Calu3 (cell line): ENCODE measurements at regions of chr12 and their contacts with region 1.

Region 1: GRCh38 chr12:40446385-40446784 is 221.6 kb downstream of the LRRK2 start:
- DNase-seq: peak; percentile 1
- H3K4me3 Mint-ChIP-seq: no peak overlapping the region
- H3K27ac Mint-ChIP-seq: no peak overlapping the region
- H3K4me1 Mint-ChIP-seq: no peaks in the 10 kb centered on the region
- H3K27me3 Mint-ChIP-seq: no peaks in the 10 kb centered on the region
- CTCF ChIP-seq: no peak

Region 2: DNA sequence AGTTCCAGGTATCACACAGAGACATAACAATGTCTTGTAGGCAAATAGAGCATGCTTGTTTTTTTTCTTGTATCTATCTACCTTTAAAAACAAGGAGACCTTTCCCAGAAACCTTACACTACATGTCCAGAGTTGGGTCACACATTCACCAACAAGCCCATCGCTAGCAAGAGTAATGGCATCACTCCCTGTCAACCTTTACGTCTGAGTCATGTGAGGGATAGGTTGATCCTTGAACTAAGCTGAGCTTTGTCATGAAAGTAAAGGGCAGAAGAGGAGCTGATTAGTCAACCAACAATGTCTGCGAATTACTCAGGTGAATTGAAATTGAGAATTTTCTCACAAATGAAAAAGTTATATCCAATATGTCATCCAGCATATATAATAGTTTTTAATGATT is 465.3 kb after region 1 on chr12:
- CTCF ChIA-PET with region 1: no interaction called
- intact Hi-C with region 1: loop called (anchors 10 kb)
- DNase-seq: no peak
- H3K4me3 Mint-ChIP-seq: no peak overlapping the region
- H3K27ac Mint-ChIP-seq: peak overlapping the region; percentile 60
- H3K4me1 Mint-ChIP-seq: peaks cover 8% of the 10 kb centered on the region
- H3K27me3 Mint-ChIP-seq: no peaks in the 10 kb centered on the region
- CTCF ChIP-seq: no peak